ENCODE measurements at regions of chrX and their contacts with region 1.

Region 1: GRCh38 chrX:16123222-16123786 is at the start of gene GRPR:
- DNase-seq: peak; percentile 73
- H3K4me3 Mint-ChIP-seq: no peak within 1 kb of the TSS
- H3K27ac Mint-ChIP-seq: no peak within 1 kb of the TSS
- H3K4me1 Mint-ChIP-seq: peaks cover 22% of the 10 kb centered on the region
- H3K27me3 Mint-ChIP-seq: peaks cover 4% of the 10 kb centered on the region
- total RNA-seq, gene GRPR: not detected

Region 2: DNA sequence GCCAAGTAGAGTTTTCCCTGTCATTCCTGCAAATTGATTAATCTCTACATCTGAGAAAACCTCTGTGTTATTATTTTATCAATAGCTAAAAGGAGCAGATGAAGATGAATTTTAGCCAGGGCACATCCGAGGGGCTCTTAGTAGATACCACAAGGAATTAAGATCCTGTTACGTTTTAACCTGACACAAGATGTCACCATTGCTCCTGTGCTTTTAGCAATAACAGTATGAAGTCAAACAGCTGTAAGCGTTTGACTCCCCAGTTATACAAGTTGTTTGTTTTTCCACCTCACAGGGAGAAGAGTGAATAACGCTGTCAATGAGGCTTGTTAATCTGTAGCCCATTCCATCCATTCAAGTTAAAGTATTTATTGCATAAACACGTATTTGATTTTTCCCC is 192.7 kb before region 1 on chrX:
- CTCF ChIA-PET with region 1: no interaction called
- intact Hi-C with region 1: loop called (anchors 10 kb)
- DNase-seq: no peak
- H3K4me3 Mint-ChIP-seq: no peak overlapping the region
- H3K27ac Mint-ChIP-seq: no peak overlapping the region
- H3K4me1 Mint-ChIP-seq: no peaks in the 10 kb centered on the region
- H3K27me3 Mint-ChIP-seq: peaks cover 13% of the 10 kb centered on the region

Region 3: DNA sequence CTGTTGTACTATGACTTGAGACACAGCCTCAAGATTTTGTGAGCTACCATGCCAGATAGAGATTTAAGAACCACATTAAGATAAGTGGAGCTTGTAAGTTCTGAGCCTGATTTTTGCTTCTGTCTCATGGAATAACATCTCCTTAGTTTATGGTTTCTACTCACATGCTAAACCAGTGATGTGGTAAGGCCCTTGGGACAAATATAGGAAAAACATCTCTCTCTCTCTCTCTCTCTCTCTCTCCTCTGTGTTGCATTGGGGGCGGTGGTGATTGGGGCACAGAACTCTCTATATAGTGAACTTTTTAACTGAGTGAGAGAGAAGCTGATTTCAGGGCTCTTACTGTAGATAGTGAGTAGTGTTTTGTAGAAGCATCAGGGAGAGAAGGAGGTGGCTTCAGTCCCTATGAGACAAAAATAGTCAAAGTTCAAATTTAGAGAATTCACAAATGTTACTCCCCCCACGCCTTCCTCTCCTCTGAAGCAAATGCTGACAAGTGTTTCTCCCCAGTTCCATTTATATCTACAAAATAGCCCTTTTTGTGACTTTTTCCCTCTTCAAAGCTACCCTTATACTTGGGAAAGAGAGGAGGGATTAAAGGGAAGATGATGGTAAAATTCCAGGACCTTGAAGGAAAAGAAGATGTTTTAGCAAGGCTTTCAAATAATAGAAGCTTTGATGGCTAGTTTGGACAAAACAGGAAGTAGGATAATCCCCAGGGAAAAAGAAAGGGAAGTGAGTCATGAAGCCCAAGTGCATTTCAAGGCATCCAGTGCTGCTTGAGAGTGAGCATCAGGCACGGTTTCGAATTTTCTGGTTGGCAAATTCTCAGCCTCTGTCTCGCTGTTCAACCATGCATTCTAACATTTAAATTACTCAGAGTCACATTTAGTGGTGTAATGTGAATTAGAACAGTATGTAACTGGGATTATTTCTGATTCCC is 134.4 kb before region 1 on chrX:
- CTCF ChIA-PET with region 1: no interaction called
- intact Hi-C with region 1: loop called (anchors 5 kb)
- DNase-seq: no peak
- H3K4me3 Mint-ChIP-seq: no peak overlapping the region
- H3K27ac Mint-ChIP-seq: no peak overlapping the region
- H3K4me1 Mint-ChIP-seq: peaks cover 9% of the 10 kb centered on the region
- H3K27me3 Mint-ChIP-seq: peaks cover 9% of the 10 kb centered on the region

Region 4: DNA sequence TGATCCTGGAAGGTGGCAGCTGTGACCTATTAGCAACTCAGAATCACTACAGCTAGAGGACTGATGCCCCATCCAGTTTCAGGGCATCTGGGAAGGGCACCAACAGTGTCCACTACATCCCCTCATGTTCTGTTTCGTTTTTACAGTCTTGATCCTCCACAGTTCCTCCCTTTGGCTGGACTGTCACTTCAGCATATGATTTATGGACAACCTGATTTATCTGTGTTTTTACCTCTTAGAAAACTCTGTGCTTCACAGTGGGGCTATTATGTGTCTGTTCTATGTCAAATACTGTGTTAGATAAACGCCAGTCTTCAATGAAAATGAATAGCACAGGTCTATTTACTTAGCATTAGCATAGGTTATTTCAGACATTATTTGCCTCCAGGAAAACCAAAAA is 63.1 kb before region 1 on chrX:
- CTCF ChIA-PET with region 1: no interaction called
- intact Hi-C with region 1: no loop called
- DNase-seq: no peak
- H3K4me3 Mint-ChIP-seq: no peak overlapping the region
- H3K27ac Mint-ChIP-seq: no peak overlapping the region
- H3K4me1 Mint-ChIP-seq: no peaks in the 10 kb centered on the region
- H3K27me3 Mint-ChIP-seq: peaks cover 2% of the 10 kb centered on the region

Region 5: GRCh38 chrX:16436348-16437188 is 313.3 kb after region 1 on chrX:
- CTCF ChIA-PET with region 1: no interaction called
- intact Hi-C with region 1: loop called (anchors 5 kb)
- DNase-seq: peak; percentile 84
- H3K4me3 Mint-ChIP-seq: no peak overlapping the region
- H3K27ac Mint-ChIP-seq: no peak overlapping the region
- H3K4me1 Mint-ChIP-seq: peaks cover 11% of the 10 kb centered on the region
- H3K27me3 Mint-ChIP-seq: no peaks in the 10 kb centered on the region

Region 6: GRCh38 chrX:16670998-16671397 is 547.7 kb after region 1 on chrX:
- CTCF ChIA-PET with region 1: no interaction called
- intact Hi-C with region 1: loop called (anchors 1 kb)
- DNase-seq: peak; percentile 45
- H3K4me3 Mint-ChIP-seq: no peak overlapping the region
- H3K27ac Mint-ChIP-seq: no peak overlapping the region
- H3K4me1 Mint-ChIP-seq: no peaks in the 10 kb centered on the region
- H3K27me3 Mint-ChIP-seq: no peaks in the 10 kb centered on the region

Region 7: GRCh38 chrX:16695079-16695676 is 571.9 kb after region 1 on chrX:
- CTCF ChIA-PET with region 1: no interaction called
- intact Hi-C with region 1: loop called (anchors 1 kb)
- DNase-seq: peak; percentile 74
- H3K4me3 Mint-ChIP-seq: no peak overlapping the region
- H3K27ac Mint-ChIP-seq: no peak overlapping the region
- H3K4me1 Mint-ChIP-seq: no peaks in the 10 kb centered on the region
- H3K27me3 Mint-ChIP-seq: no peaks in the 10 kb centered on the region

Region 8: DNA sequence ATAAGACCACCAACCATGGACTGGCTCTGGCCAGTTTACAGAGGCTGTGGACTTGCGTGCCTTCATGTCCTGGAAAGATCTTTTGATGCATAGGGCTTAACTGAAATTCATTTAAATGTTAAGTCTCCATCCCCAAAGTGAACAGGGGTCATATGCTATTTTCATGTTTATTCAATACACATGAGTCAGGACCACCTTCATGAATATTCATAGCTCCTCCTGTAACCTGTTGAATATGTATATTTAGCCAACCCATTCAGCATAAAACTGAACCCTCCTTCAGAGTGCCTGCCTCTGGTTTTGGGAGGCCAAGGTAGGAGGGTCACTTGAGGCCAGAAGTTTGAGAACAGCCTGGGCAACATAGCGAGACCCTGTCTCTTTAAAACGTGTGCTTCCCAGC is 582.1 kb after region 1 on chrX:
- CTCF ChIA-PET with region 1: no interaction called
- intact Hi-C with region 1: no loop called
- DNase-seq: no peak
- H3K4me3 Mint-ChIP-seq: no peak overlapping the region
- H3K27ac Mint-ChIP-seq: no peak overlapping the region
- H3K4me1 Mint-ChIP-seq: no peaks in the 10 kb centered on the region
- H3K27me3 Mint-ChIP-seq: no peaks in the 10 kb centered on the region

Measured in activated naive CD4-positive, alpha-beta T cell treated with anti-CD3 and anti-CD28 coated beads for 36 hours (primary cell).